AG04450 (cell line): ENCODE measurements at regions of chr15 and their contacts with region 1.

Region 1: GRCh38 chr15:45166834-45167630 is 20.7 kb downstream of the SHF start:
- DNase-seq: peak; percentile 53
- H3K4me3 ChIP-seq: peak overlapping the region; percentile 58
- H3K27ac ChIP-seq: peak overlapping the region; percentile 83
- H3K27me3 ChIP-seq: no peaks in the 10 kb centered on the region
- CTCF ChIP-seq: peak; percentile 71

Region 2: DNA sequence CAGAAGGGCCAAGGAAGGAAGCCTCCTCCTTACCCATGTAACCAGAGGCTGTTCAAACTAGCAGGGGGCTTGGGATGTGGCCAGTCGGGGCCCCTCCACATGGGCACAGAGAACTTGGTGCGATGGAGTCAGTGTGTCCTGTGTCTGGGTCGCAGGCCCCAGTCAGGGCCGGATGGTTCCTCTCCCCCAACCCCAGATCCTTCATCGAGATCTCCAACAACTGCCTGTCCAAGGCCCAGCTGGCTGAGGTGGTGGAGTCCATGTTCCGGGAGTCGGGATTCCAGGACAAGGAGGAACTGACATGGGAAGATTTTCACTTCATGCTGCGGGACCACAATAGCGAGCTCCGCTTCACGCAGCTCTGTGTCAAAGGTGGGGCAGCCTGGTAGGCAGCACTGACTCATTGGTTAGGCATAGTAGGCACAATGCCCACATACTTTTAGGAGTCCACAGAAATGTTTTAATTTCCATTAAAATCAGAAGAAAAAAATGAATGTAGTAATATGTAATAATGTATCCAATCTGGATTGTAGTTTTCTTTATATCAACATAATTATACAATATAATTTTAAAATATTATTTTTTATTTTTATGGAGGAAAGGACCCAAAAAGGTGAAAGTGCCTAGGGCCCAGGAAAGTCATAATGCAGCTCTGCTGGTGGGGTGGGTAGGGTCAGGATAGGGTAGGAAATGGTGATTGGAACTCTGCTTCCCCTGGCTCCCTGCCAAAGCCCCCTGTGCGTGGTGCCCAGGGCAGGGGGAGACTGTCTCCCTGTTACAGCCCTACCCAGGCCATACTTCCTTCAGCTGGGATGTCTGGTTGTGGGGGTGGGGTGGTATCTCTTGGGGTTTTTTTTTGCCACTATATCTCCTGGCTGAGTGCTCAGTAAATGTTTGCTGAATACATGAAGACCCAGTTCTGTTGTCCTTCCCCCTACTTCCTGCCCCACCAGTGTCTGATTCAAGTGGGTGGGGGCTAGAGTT is 18.7 kb before region 1 on chr15:
- CTCF ChIA-PET with region 1: interaction called, 22 read pairs
- POLR2A ChIA-PET with region 1: no interaction called
- DNase-seq: no peak
- H3K4me3 ChIP-seq: no peak overlapping the region
- H3K27ac ChIP-seq: no peak overlapping the region
- H3K27me3 ChIP-seq: peaks cover 16% of the 10 kb centered on the region
- CTCF ChIP-seq: no peak

Region 3: DNA sequence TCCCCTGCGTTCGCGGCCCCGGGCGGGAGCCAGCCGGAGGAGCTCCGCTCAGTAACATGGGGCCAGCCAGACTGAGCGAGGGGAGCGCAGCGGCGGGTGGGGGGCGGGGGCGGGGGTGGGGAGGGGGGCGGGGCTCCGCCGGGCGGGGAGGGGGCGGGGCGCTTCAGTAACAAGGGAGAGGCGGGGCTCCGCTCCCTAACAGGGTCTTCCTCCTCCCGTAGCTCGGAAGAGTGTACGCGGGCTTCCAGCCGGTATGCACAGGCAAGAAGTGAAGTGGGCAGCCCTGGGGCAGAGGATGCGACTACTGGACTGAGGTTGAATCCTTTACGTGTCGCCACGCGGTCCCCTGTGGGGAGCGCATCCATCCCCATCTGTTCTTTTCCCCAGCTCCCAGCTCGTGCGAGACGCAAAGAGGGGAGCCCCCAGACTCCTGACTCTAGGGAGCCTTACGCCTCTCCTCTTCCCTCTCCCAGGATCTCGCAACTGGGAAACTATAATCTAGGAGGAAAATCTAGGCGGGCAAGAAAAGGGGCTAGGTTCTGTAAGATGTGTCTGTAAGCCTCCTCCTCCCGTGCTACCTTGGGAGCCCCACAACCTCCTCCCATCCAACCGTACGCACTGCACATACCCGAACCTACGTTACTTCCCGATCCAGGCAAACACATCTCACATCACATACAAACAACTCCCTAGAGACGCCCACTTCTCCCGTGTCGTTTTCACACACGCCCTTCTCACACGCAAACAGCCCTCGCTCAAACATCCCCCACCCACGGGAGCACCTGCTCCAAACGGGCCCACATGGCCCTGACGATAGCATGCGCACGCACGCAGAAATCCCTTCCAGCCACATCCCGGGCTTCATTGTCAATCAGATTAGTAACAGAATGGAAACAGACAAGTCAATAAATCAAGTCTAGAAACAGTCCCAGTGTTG is 21.1 kb after region 1 on chr15 and contains the start of gene SHF:
- CTCF ChIA-PET with region 1: interaction called, 27 read pairs
- POLR2A ChIA-PET with region 1: interaction called, 3 read pairs
- DNase-seq: peak; percentile 21
- H3K4me3 ChIP-seq: peak within 1 kb of the TSS; percentile 76
- H3K27ac ChIP-seq: no peak within 1 kb of the TSS
- H3K27me3 ChIP-seq: peaks cover 17% of the 10 kb centered on the region
- CTCF ChIP-seq: no peak
- polyA plus RNA-seq, gene SHF: 4.1 and 4.7 TPM in 2 replicates

Region 4: DNA sequence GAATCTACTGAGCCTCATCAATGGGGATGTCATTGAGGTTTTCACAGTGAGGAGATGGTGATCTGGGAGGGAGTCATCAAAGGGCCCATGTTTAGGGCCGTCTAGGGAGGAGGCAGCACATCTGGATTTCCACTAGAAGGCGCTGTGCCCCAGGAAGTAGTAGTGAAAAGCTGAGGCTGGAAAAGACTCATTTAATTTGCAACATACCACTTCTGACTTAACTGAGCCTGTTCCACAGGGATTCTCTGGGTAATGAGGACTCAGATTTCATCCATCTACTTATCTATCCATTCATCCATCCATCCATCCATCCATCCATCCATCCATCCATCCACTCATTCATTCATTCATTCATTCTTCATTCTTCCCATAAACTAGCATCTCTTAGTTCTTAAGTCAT is 38.2 kb after region 1 on chr15:
- CTCF ChIA-PET with region 1: interaction called, 70 read pairs
- POLR2A ChIA-PET with region 1: interaction called, 4 read pairs
- DNase-seq: peak; percentile 21
- H3K4me3 ChIP-seq: no peak overlapping the region
- H3K27ac ChIP-seq: no peak overlapping the region
- H3K27me3 ChIP-seq: peaks cover 3% of the 10 kb centered on the region
- CTCF ChIP-seq: peak; percentile 88

Region 5: DNA sequence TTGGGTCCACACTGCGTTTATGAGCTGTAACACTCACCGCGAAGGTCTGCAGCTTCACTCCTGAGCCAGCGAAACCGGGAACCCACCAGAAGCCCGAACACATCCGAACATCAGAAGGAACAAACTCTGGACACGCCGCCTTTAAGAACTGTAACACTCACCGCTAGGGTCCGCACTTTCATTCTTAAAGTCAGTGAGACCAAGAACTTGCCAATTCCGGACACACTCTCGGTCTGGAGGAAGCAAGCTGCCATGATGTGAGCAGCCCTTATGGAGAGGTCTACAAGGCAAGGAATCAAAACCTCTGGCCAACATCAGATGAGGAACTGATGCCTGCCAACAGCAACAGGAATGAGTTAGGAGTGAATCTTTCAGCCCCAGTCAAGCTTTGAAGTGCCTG is 147.9 kb after region 1 on chr15:
- CTCF ChIA-PET with region 1: no interaction called
- POLR2A ChIA-PET with region 1: no interaction called
- DNase-seq: no peak
- H3K4me3 ChIP-seq: no peak overlapping the region
- H3K27ac ChIP-seq: no peak overlapping the region
- H3K27me3 ChIP-seq: no peaks in the 10 kb centered on the region
- CTCF ChIP-seq: 0 out of 2 replicates have a peak, but pooled peaks have one; percentile 27

Region 6: GRCh38 chr15:45402162-45402954 is 235.3 kb after region 1 on chr15:
- CTCF ChIA-PET with region 1: interaction called, 202 read pairs
- POLR2A ChIA-PET with region 1: interaction called, 10 read pairs
- DNase-seq: peak; percentile 98
- H3K4me3 ChIP-seq: peak overlapping the region; percentile 87
- H3K27ac ChIP-seq: peak overlapping the region; percentile 53
- H3K27me3 ChIP-seq: peaks cover 3% of the 10 kb centered on the region
- CTCF ChIP-seq: no peak

Region 7: DNA sequence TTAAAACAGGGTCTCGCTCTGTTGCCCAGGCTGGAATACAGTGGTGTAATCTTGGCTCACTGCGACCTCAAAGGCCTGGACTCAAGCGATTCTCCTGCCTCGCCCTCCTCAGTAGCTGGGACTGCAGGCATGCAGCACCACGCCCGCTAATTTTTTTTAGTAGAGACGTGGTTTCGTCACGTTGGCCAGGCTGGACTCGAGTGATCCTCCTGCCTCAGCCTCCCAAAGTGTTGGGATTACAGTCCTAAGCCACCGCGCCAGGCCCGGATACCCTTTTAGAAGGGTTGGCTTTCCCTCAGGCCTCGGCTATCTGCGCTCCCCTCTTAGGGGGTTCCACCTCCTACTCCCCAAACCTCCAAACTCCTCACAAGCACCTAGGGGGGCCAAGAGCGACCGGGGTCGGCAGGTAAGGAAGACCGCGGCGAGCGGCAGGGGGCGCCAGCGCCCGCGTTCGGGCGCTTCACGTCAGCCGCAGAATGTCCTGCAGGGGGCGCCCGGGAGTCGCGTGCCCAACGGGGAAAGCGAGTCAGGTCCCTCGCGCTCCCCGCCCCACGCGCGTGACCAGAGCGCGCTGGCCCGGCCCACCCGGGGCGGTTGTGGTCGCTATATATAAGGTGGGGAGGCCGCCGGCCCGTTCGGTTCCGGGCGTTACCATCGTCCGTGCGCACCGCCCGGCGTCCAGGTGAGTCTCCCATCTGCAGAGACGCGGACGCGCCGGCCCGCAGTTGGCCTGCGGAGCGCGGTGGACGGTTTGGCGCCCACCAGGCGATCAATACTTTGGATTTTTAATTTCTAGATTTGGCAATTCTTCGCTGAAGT is 263.2 kb after region 1 on chr15:
- CTCF ChIA-PET with region 1: interaction called, 30 read pairs
- POLR2A ChIA-PET with region 1: no interaction called
- DNase-seq: peak; percentile 10
- H3K4me3 ChIP-seq: peak overlapping the region; percentile 59
- H3K27ac ChIP-seq: no peak overlapping the region
- H3K27me3 ChIP-seq: peaks cover 3% of the 10 kb centered on the region
- CTCF ChIP-seq: peak; percentile 100

Region 8: DNA sequence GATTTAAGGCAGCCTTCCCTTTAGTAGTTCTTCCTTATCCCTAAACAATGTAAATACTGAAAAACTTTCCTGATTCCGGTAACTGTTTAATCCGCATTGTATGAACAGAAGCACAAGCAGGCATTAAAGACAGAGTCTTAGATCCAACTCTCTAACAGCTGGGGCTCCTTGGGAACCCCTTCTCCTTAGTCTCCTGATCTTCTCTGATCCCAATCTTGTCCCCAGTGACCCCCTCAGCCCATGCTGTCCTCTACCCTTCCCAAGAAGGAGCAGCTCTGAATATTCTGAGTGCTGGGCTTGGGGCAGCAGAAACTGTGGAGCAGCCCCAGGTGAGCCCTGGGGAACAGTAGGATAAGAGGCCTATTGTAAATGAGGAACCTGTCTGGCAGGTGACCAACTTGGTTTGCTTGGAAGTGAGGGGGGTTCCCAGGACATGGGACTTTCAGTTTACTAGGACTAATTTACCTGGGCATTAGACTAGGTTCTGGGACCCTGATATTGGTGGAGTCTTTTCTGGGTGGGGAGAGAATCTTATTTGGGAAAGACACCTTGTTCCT is 368.5 kb after region 1 on chr15:
- CTCF ChIA-PET with region 1: no interaction called
- POLR2A ChIA-PET with region 1: no interaction called
- DNase-seq: no peak
- H3K4me3 ChIP-seq: no peak overlapping the region
- H3K27ac ChIP-seq: no peak overlapping the region
- H3K27me3 ChIP-seq: no peaks in the 10 kb centered on the region
- CTCF ChIP-seq: no peak